ENCODE measurements at regions of chr14 and their contacts with region 1.

Region 1: GRCh38 chr14:64303471-64303917 is 9.3 kb upstream of the ESR2 start:
- DNase-seq: no peak
- ATAC-seq: peak; percentile 99
- H3K4me3 Mint-ChIP-seq: no peak overlapping the region
- H3K27ac Mint-ChIP-seq: peak overlapping the region; percentile 49; the same call in 1 of the 2 replicates
- H3K4me1 Mint-ChIP-seq: peaks cover 10% of the 10 kb centered on the region
- H3K27me3 Mint-ChIP-seq: no peaks in the 10 kb centered on the region; the same call in 1 of the 2 replicates
- CTCF ChIP-seq: peak; percentile 76

Region 2: GRCh38 chr14:64137657-64138290 is 165.7 kb before region 1 on chr14:
- CTCF ChIA-PET with region 1: interaction called, 16 read pairs
- POLR2A ChIA-PET with region 1: no interaction called
- DNase-seq: peak; percentile 24
- ATAC-seq: peak; percentile 41; the same call in 1 of the 2 replicates
- H3K4me3 Mint-ChIP-seq: no peak overlapping the region
- H3K27ac Mint-ChIP-seq: no peak overlapping the region
- H3K4me1 Mint-ChIP-seq: no peaks in the 10 kb centered on the region
- H3K27me3 Mint-ChIP-seq: no peaks in the 10 kb centered on the region
- CTCF ChIP-seq: no peak

Region 3: GRCh38 chr14:64234877-64235651 is 68.4 kb before region 1 on chr14:
- CTCF ChIA-PET with region 1: interaction called, 13 read pairs
- POLR2A ChIA-PET with region 1: no interaction called
- DNase-seq: no peak
- ATAC-seq: 0 out of 2 replicates have a peak, but pooled peaks have one; percentile 12
- H3K4me3 Mint-ChIP-seq: no peak overlapping the region
- H3K27ac Mint-ChIP-seq: no peak overlapping the region
- H3K4me1 Mint-ChIP-seq: no peaks in the 10 kb centered on the region
- H3K27me3 Mint-ChIP-seq: no peaks in the 10 kb centered on the region
- CTCF ChIP-seq: no peak

Region 4: GRCh38 chr14:64338616-64339316 is 35.3 kb after region 1 on chr14:
- CTCF ChIA-PET with region 1: interaction called, 10 read pairs
- POLR2A ChIA-PET with region 1: no interaction called
- DNase-seq: peak; percentile 93
- ATAC-seq: peak; percentile 88
- H3K4me3 Mint-ChIP-seq: peak overlapping the region; percentile 91
- H3K27ac Mint-ChIP-seq: peak overlapping the region; percentile 99
- H3K4me1 Mint-ChIP-seq: peaks cover 29% of the 10 kb centered on the region
- H3K27me3 Mint-ChIP-seq: peaks cover 2% of the 10 kb centered on the region; the same call in 1 of the 2 replicates
- CTCF ChIP-seq: no peak